ENCODE measurements at regions of chr6 and their contacts with region 1.

Region 1: GRCh38 chr6:144482142-144482541 is 197.0 kb downstream of the UTRN start:
- DNase-seq: peak; percentile 76 to 83
- H3K4me3 ChIP-seq: no peak overlapping the region
- H3K27ac ChIP-seq: peak overlapping the region in 1 of 2 donors; percentile 44
- H3K4me1 ChIP-seq: peaks cover 4 to 42% (median 29%) of the 10 kb centered on the region in 4 donors
- H3K27me3 ChIP-seq: no peaks in the 10 kb centered on the region
- CTCF ChIP-seq: peak; percentile 50 to 65

Region 2: GRCh38 chr6:144215932-144216667 is 266.0 kb before region 1 on chr6:
- intact Hi-C with region 1: loop called (anchors 5 kb)
- DNase-seq: peak; percentile 93 to 98
- H3K4me3 ChIP-seq: peak overlapping the region; percentile 65 to 80
- H3K27ac ChIP-seq: peak overlapping the region; percentile 86 to 92
- H3K4me1 ChIP-seq: peaks cover 0 to 19% (median 12%) of the 10 kb centered on the region in 4 donors
- H3K27me3 ChIP-seq: no peaks in the 10 kb centered on the region
- CTCF ChIP-seq: peak; percentile 80 to 85

Region 3: DNA sequence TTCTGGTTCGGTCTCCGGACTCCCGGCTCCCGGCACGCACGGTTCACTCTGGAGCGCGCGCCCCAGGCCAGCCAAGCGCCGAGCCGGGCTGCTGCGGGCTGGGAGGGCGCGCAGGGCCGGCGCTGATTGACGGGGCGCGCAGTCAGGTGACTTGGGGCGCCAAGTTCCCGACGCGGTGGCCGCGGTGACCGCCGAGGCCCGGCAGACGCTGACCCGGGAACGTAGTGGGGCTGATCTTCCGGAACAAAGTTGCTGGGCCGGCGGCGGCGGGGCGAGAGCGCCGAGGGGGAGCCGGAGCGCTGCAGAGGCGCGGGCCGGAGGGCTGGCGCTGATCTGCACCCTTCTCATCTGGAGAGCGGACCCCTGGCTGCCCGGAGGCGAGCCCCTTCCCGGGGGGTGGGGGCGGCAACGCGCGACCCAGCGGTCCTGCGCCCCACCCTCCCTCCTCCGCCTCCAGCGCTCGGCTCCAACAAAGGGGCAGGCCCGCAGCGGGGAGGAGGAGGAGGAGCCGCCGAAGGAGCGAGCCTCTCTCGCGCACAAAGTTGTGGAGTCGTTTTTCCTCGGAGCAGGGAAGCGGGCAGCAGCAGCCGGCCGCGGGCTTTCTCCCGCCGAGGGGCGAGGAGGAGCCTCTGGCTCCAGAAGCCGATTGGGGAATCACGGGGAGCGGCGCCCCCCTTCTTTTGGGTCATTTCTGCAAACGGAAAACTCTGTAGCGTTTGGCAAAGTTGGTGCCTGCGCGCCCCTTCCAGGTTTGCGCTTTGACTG is 197.2 kb before region 1 on chr6 and contains the start of gene UTRN:
- intact Hi-C with region 1: loop called (anchors 5 kb)
- DNase-seq: peak; percentile 79 to 91
- H3K4me3 ChIP-seq: peak within 1 kb of the TSS; percentile 84 to 95
- H3K27ac ChIP-seq: peak within 1 kb of the TSS; percentile 95 to 96
- H3K4me1 ChIP-seq: peaks cover 0 to 30% (median 4%) of the 10 kb centered on the region in 4 donors
- H3K27me3 ChIP-seq: no peaks in the 10 kb centered on the region
- CTCF ChIP-seq: no peak